PC-9 (cell line): ENCODE measurements at regions of chr17 and their contacts with region 1.

Region 1: DNA sequence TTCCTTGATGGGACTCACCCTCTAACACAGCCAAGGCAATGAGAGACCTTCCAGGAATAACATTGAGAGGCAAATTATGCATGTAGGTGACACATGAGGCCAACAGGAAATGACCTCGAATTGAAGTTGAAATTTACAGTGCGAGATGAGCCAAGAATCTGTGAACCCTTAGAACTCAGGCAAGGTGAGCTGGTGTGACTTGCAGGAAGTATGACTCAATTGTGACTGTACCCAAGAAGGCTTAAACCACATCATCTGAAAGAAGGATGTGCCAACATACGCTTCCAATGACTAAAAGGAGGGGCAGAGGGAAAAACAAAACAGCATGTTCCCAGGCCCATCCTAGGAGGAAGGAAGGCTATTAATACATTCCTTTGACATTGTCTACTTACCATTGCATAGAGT is 44.8 kb downstream of the PITPNC1 start:
- DNase-seq: peak; percentile 70 to 100
- H3K4me3 ChIP-seq: no peak overlapping the region
- H3K27ac ChIP-seq: peak overlapping the region; percentile 93
- H3K4me1 ChIP-seq: peaks cover 22% of the 10 kb centered on the region
- H3K27me3 ChIP-seq: no peaks in the 10 kb centered on the region
- CTCF ChIP-seq: no peak

Region 2: GRCh38 chr17:67400193-67400592 is 21.7 kb before region 1 on chr17:
- CTCF ChIA-PET with region 1: interaction called, 13 read pairs
- POLR2A ChIA-PET with region 1: no interaction called
- intact Hi-C with region 1: no loop called
- DNase-seq: no peak
- H3K4me3 ChIP-seq: no peak overlapping the region
- H3K27ac ChIP-seq: no peak overlapping the region
- H3K4me1 ChIP-seq: no peaks in the 10 kb centered on the region
- H3K27me3 ChIP-seq: no peaks in the 10 kb centered on the region
- CTCF ChIP-seq: no peak

Region 3: DNA sequence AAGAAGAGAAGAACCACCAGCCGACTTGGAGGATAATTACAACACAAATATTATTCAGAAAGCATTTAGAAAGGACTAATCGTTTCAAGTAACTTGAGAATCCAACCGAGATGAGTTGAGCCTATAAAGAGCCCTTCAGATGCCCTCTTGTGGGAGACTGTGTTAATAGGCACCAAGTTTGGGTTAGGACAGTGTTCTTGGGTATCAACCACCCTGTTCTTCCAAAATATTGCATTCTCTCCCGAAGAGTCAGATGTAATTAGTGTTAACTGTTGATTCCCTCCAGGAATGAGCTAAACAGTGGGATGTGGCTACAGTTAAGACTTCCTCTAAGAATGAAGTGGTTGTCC is 208.1 kb after region 1 on chr17:
- CTCF ChIA-PET with region 1: no interaction called
- POLR2A ChIA-PET with region 1: interaction called, 13 read pairs
- intact Hi-C with region 1: no loop called
- DNase-seq: no peak
- H3K4me3 ChIP-seq: no peak overlapping the region
- H3K27ac ChIP-seq: no peak overlapping the region
- H3K4me1 ChIP-seq: no peaks in the 10 kb centered on the region
- H3K27me3 ChIP-seq: no peaks in the 10 kb centered on the region
- CTCF ChIP-seq: peak; percentile 49